ENCODE measurements at regions of chr3 and their contacts with region 1.

Region 1: DNA sequence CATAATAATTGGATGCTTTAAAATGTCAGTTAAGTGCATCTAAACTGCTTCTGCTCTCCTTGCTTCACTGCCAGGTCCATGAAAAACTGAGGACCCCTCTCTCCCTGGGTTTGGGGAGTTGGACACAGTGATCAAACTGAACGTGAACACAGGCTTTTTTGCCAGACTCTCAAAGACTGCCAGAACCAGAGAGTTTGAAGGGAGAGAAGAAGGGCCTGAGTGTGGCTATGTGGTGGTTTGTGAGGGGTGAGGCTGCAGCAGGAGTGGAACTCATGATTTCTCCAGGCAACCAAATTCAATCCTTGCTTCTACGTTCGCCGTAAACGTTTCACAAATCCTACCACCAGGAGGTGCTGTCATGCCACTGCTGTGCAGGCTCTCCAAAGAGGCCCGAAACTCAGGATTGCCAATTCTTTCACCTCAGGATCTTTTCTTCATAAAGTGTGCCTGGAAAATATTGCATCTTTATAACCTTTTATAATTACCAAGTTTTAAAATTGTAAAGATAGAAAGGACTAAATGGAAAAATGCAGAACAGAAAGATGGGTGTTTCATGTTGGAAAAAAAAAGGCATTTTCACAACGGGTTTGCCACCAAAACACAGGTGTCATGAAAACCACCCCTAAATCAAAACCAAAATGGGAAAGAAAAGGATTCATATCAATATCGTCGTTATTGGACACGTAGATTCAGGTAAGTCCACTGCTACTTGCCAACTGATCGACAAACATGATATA is 19.7 kb downstream of the TM4SF4 start:
- DNase-seq: peak in 2 of 3 donors; percentile 54 to 78
- ATAC-seq: peak; percentile 72 to 73
- H3K4me3 ChIP-seq: no peak overlapping the region
- H3K27ac ChIP-seq: no peak overlapping the region
- H3K4me1 ChIP-seq: peaks cover 2% of the 10 kb centered on the region
- H3K27me3 ChIP-seq: no peaks in the 10 kb centered on the region

Region 2: DNA sequence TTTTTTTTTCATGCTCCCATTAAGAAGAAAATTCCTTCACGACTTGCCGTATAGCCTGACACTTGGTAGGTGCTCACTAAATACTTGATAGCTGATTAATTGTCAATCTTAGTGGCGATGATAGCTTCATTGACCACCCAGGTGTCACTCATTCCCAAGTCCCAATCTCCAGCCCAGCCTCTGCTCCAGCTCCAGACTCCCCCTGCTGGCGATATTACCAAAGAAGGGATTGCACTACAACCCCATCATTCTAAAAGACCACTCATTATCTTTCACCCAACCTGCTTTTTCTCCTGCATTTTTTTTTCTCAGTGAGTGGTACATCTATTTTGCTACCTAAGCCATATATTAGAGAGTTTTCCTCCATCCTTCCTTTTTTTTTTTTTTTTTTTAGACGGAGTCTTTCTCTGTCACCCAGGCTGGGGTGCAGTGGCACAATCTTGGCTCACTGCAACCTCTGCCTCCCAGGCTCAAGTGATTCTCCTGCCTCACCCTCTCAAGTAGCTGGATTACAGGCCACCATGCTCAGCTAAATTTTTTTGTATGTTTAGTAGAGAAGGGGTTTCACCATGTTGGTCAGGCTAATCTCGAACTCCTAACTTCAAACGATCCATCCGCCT is 277.6 kb after region 1 on chr3:
- intact Hi-C with region 1: loop called in 1 of 4 experiments (anchors 10 kb)
- DNase-seq: peak; percentile 30 to 59 (median 57)
- ATAC-seq: peak; percentile 38 to 75
- H3K4me3 ChIP-seq: no peak overlapping the region
- H3K27ac ChIP-seq: no peak overlapping the region
- H3K4me1 ChIP-seq: no peaks in the 10 kb centered on the region
- H3K27me3 ChIP-seq: no peaks in the 10 kb centered on the region

Region 3: DNA sequence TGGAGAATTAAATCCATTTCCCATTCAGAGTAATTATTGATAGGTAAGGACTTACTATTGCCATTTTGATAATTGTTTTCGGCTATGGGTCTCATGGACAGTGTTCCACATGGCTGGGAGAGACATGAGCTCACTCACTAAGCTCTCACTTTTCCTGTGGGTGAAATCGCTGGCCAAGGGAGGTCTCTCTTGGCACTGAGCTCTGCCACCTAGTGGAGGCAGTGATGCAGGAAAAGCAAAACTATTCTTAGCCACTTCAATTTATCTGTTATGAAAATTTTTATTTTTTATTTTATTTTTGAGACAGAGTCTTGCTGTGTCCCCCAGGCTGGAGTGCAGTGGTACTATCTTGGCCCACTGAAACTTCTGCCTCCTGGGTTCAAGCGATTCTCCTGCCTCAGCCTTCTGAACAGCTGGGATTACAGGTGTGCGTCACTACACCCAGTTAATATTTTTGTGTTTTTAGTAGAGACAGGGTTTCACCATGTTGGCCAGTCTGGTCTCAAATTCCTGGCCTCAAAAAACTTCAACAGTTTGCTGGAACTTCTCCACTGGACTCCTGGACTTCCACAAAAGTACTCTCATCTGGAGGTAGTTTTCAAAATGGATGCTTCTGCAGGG is 314.1 kb after region 1 on chr3:
- intact Hi-C with region 1: loop called in 1 of 4 experiments (anchors 10 kb)
- DNase-seq: peak; percentile 68 to 79 (median 76)
- ATAC-seq: no peak
- H3K4me3 ChIP-seq: no peak overlapping the region
- H3K27ac ChIP-seq: no peak overlapping the region
- H3K4me1 ChIP-seq: no peaks in the 10 kb centered on the region
- H3K27me3 ChIP-seq: no peaks in the 10 kb centered on the region